ENCODE measurements at regions of chr11 and their contacts with region 1.

Region 1: GRCh38 chr11:108697872-108698473 is 33.1 kb downstream of the DDX10 start:
- DNase-seq: peak; percentile 64
- ATAC-seq: peak; percentile 90
- H3K4me3 ChIP-seq: no peak overlapping the region
- H3K27ac ChIP-seq: no peak overlapping the region
- H3K4me1 ChIP-seq: no peaks in the 10 kb centered on the region
- H3K27me3 ChIP-seq: no peaks in the 10 kb centered on the region
- CTCF ChIP-seq: peak; percentile 92

Region 2: GRCh38 chr11:108871152-108871551 is 173.2 kb after region 1 on chr11:
- CTCF ChIA-PET with region 1: interaction called, 4 read pairs
- POLR2A ChIA-PET with region 1: no interaction called
- in situ Hi-C with region 1: no loop called
- intact Hi-C with region 1: loop called (anchors 5 kb)
- DNase-seq: no peak
- ATAC-seq: peak; percentile 63; the same call in 1 of the 2 replicates
- H3K4me3 ChIP-seq: no peak overlapping the region
- H3K27ac ChIP-seq: no peak overlapping the region
- H3K4me1 ChIP-seq: no peaks in the 10 kb centered on the region; the same call in 1 of the 2 replicates
- H3K27me3 ChIP-seq: no peaks in the 10 kb centered on the region
- CTCF ChIP-seq: peak; percentile 73

Region 3: DNA sequence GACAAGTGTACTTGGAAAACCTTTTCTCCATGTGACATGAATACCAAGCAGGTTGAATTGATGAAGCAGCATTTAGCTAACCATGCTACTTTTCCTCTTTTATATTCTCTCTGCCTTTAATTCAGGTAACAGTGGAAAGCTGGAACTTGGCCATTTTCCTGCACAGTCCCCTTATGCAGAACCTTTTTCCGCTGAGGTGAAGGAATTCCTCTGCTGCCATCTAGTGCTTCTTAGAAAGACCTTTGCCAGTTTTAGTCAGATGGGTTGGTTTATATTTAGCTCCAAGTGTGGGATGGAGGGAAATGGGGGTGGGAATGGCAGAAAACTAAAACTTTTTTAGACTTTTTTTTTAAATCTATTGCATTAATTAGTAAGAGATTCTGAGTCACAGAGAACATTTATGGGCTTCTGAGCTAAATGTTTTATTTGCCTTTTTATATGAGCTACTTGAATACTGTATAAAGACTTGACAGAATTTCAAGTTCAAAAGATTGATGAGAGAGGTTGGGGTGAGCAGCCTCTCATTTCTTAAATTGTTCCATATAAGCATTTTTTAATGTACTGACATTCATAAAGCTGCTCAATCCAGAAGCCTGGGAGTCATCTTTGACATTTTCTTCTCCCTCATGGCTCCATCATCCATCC is 1241.3 kb after region 1 on chr11:
- CTCF ChIA-PET with region 1: interaction called, 3 read pairs
- POLR2A ChIA-PET with region 1: no interaction called
- in situ Hi-C with region 1: no loop called
- intact Hi-C with region 1: loop called (anchors 2 kb)
- DNase-seq: peak; percentile 67
- ATAC-seq: peak; percentile 97
- H3K4me3 ChIP-seq: no peak overlapping the region
- H3K27ac ChIP-seq: no peak overlapping the region
- H3K4me1 ChIP-seq: no peaks in the 10 kb centered on the region
- H3K27me3 ChIP-seq: peaks cover 7% of the 10 kb centered on the region; the same call in 1 of the 2 replicates
- CTCF ChIP-seq: peak; percentile 83

Measured in Panc1 (cell line).